ENCODE measurements at regions of chr7 and their contacts with region 1.

Region 1: DNA sequence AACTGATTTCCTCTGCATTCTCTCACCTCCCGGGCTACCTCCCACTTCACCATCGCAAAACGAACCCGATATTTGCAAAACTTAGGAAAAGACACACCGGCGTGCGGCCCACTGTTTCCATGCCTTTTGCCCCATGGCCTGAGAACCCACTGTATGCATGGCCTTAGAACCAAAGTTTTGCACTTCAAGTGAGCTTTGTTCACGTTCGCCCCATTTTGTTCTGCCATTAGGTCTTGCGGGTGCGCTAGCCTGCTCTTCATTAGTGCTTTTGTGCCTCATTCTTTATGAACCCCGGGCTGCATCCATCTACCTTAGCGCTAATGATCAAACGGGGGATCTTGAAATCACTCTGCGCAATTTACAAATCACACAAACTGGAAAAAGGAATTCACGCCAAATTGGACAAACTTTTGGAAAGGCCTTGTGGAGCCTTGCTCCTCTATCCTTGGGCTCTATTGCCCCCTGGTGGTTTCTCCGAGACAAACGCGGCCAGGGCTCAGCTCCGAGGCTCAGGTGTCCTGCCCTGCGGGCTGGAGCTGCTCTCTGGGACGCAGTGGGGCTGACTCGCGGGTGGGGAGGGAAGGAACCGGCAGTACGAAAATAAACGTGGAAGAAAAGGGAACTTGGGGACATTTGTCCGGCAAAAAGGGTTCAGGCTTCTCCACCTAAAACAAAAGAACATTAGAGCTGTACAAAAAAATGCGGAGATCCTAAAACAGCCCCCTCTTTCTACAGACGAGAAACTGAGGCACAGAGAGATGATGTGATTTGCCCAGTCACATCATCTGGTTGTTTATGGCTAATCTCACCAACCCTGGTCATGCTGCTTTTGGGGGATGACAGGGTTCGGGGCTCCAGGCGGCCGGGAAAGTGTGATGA is 300.4 kb upstream of the NFE2L3 start:
- DNase-seq: peak; percentile 84
- ATAC-seq: peak; percentile 47
- H3K4me3 Mint-ChIP-seq: peak overlapping the region; percentile 49
- H3K27ac Mint-ChIP-seq: peak overlapping the region; percentile 16
- H3K4me1 Mint-ChIP-seq: peaks cover 18% of the 10 kb centered on the region
- H3K27me3 Mint-ChIP-seq: peaks cover 48% of the 10 kb centered on the region

Region 2: GRCh38 chr7:25259587-25260243 is 591.9 kb before region 1 on chr7:
- CTCF ChIA-PET with region 1: interaction called, 7 read pairs
- POLR2A ChIA-PET with region 1: no interaction called
- intact Hi-C with region 1: loop called (anchors 1 kb)
- DNase-seq: peak; percentile 81
- ATAC-seq: peak; percentile 83
- H3K4me3 Mint-ChIP-seq: no peak overlapping the region
- H3K27ac Mint-ChIP-seq: no peak overlapping the region
- H3K4me1 Mint-ChIP-seq: peaks cover 29% of the 10 kb centered on the region
- H3K27me3 Mint-ChIP-seq: peaks cover 3% of the 10 kb centered on the region

Region 3: DNA sequence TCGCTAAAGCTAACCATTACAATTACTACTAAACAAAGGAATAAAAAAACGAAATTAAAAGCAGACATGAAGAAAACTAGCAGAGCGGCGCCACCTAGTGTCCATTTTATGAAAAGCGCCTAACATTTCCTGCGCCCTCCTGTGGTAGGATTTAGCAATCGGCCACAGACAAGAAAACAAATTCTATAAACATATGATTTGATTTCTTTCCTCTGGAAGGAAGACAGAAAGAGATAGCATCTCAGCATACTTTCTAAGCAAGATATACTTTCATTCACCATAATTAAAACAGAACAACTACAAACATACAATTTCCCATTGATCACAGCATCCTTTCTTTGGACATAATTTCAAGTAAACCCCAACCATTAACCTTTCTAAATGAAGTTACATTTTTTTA is 285.6 kb before region 1 on chr7:
- CTCF ChIA-PET with region 1: interaction called, 25 read pairs
- POLR2A ChIA-PET with region 1: no interaction called
- intact Hi-C with region 1: loop called (anchors 1 to 5 kb)
- DNase-seq: peak; percentile 77
- ATAC-seq: no peak
- H3K4me3 Mint-ChIP-seq: no peak overlapping the region
- H3K27ac Mint-ChIP-seq: no peak overlapping the region
- H3K4me1 Mint-ChIP-seq: no peaks in the 10 kb centered on the region
- H3K27me3 Mint-ChIP-seq: no peaks in the 10 kb centered on the region

Region 4: DNA sequence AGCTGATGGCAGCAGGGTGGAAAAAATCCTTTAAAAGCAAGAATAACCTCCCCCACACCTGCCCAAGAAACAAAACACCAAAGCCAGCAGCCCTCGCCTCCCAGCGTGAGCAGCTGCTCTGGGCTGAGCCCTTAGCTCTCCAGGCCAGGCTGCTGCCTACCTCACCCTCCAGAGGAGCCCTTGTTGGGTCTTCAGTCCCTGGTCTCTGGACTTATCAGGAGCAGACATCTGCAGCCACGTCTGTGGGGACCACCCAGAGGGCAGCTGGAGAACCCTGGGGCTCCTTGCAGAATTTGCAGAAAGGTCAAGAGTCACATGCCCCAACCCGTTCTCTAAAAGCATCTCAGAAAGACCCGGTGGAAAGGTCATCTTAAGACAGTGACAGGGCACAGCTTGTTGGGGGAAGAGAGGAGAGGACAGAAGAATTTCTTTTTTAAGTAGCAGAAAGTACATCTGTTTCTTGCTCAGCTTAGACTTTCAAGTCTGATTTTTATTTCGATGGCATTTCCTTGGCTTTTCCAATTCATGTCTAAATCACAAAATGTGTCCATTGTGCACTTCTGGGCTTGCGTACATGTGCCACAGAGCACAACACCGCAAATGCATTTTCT is 125.3 kb before region 1 on chr7:
- CTCF ChIA-PET with region 1: no interaction called
- POLR2A ChIA-PET with region 1: no interaction called
- intact Hi-C with region 1: loop called (anchors 5 kb)
- DNase-seq: no peak
- ATAC-seq: no peak
- H3K4me3 Mint-ChIP-seq: no peak overlapping the region
- H3K27ac Mint-ChIP-seq: no peak overlapping the region
- H3K4me1 Mint-ChIP-seq: no peaks in the 10 kb centered on the region
- H3K27me3 Mint-ChIP-seq: peaks cover 4% of the 10 kb centered on the region

Region 5: DNA sequence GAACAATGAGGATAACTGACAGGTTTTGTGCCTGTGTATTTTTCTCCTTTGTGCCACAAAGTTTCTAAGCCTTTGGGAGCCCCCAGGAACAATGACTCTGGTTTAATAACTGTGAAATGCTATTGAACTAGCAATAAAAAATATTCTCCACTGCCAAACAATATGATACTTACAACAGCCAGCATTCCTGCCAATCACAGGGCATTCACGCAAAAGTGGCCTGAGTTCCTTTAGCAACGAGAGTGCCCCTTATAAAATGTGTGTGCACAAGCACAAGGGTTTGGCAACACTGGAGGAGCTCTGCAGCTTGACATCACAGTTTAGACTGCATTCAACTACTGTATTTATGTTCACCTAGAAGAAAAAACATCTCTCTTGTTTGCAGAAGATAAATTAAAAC is 112.4 kb before region 1 on chr7:
- CTCF ChIA-PET with region 1: no interaction called
- POLR2A ChIA-PET with region 1: no interaction called
- intact Hi-C with region 1: no loop called
- DNase-seq: no peak
- ATAC-seq: no peak
- H3K4me3 Mint-ChIP-seq: no peak overlapping the region
- H3K27ac Mint-ChIP-seq: no peak overlapping the region
- H3K4me1 Mint-ChIP-seq: no peaks in the 10 kb centered on the region
- H3K27me3 Mint-ChIP-seq: peaks cover 25% of the 10 kb centered on the region

Region 6: DNA sequence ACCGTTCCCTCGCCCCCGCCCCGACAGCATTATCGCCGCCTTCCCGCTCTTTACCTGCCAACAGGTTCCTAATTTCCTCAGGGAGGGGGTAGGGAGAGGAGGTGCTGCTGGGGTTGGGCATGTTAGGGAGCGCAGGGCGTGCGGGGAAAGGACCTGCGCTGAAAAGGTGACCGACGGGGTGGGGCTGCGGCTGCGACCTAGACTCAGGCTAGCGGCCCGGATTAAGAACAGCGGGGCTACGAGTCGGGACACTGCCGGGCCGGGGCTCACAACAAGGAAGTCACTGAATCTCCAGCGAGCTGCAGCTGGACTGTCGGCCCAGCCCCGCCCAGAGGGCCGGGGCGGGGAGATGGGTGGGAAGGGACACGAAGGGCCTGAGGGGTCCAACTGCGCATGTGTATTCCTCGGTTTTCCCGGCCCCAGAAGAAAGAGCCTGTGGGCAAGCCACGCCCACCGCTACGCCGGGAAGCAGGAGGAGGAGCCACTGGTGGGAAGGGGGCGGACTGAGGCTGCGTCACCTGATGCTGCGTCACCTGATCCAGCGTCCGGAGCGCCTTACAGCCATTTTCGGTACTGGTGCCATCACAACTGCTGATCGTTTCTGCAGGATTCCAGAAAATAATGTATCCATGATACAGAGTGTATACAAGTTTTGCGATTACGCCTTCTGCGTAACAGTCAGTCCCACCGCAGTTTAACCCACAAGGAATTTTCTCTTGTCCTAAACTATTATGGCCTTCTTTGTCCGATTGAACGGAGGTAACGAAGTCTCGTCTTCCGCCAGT is 1012.9 kb after region 1 on chr7 and contains the start of gene SKAP2:
- CTCF ChIA-PET with region 1: no interaction called
- POLR2A ChIA-PET with region 1: no interaction called
- intact Hi-C with region 1: loop called in 1 of 2 experiments (anchors 10 kb)
- DNase-seq: peak; percentile 94
- ATAC-seq: peak; percentile 95
- H3K4me3 Mint-ChIP-seq: peak within 1 kb of the TSS; percentile 86
- H3K27ac Mint-ChIP-seq: peak within 1 kb of the TSS; percentile 83
- H3K4me1 Mint-ChIP-seq: peaks cover 17% of the 10 kb centered on the region
- H3K27me3 Mint-ChIP-seq: peaks cover 34% of the 10 kb centered on the region
- total RNA-seq, gene SKAP2: 7.8 to 10.4 TPM

Region 7: DNA sequence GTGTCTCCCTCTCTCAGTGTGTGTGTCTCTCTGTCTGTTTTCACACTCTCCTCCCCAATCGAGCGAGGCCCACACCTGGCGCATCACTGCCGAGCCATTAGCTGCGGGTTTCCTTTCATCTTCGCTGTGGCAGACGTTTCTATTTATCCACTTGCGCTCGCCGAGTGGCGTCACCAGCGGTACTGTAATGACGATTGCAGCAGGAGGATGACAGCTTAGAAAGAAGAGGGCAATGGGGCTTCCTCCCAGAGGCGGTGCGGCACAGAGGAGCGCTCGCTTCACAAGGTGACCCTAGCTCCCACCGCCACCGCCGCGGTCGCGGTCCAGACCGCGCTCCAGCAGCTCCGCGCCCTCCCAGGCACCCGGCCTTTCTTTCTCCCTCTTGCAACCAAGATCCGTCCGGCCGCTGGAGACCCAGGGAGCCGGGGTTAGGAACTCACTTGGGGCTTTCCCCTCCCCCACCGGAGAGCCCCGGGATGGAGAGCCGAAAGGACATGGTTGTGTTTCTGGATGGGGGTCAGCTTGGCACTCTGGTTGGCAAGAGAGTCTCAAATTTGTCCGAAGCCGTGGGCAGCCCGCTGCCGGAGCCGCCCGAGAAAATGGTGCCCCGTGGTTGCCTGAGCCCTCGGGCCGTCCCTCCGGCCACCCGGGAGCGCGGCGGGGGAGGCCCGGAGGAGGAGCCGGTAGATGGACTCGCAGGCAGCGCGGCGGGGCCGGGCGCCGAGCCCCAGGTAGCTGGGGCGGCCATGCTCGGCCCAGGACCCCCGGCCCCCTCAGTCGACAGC is 1391.2 kb after region 1 on chr7 and contains the start of gene EVX1:
- CTCF ChIA-PET with region 1: no interaction called
- POLR2A ChIA-PET with region 1: no interaction called
- intact Hi-C with region 1: loop called in 1 of 2 experiments (anchors 5 kb)
- DNase-seq: peak; percentile 77
- ATAC-seq: peak; percentile 56
- H3K4me3 Mint-ChIP-seq: peak within 1 kb of the TSS; percentile 33
- H3K27ac Mint-ChIP-seq: no peak within 1 kb of the TSS
- H3K4me1 Mint-ChIP-seq: peaks cover 18% of the 10 kb centered on the region
- H3K27me3 Mint-ChIP-seq: peaks cover 74% of the 10 kb centered on the region
- total RNA-seq, gene EVX1: not detected